A549 (cell line): ENCODE measurements at regions of chr6 and their contacts with region 1.

Region 1: DNA sequence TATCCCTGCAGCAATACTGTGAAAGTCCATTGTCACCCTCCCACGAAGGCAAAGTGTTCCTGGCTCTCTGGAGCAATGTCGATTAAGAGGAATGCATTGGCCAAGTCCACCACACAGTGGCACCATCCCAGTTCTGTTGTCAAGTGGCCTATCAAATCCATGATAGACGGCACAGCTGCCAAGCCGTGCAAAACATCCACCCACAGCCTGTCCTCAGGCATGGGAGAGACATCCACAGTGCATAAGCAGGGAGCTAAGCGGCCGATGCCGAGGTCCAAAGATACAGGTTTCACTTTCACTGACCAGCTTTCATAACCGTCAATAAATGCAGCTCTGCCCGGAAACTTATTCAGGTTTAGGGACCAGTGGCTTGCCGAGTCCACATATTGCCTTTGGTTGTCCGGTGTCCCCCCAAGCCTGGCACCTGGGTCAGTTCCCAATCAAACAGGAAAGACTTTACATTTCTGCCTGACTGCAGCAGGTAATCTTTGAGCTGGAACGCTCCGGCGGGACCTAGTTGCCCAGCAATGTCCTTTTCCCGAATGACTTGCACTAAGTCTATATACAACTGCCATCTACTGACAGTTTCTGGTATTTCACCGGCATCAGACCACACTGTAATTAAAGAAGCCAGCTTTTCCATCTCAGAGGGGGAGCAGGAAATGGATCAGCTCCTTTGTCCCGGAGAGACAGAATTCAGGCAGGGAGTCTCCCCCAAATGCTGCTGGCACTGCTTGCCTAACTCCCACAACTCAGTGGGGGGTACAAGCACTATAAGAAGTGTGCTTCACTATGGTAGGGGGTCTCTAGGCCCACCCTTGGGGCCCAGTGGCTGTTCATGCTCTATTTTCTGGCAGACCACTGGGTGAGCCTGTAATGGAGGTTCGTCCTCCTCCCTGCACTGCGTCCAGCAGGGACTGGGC is 6.3 kb downstream of the ZKSCAN3 start:
- DNase-seq: peak; percentile 48 to 81
- ATAC-seq: peak; percentile 93 to 96
- H3K4me3 ChIP-seq: peak overlapping the region; percentile 54
- H3K27ac ChIP-seq: peak overlapping the region; percentile 59 to 87; a peak in 5 of 6 replicates
- H3K4me1 ChIP-seq: peaks cover 19% of the 10 kb centered on the region
- CTCF ChIP-seq: peak; percentile 58
- EP300 ChIP-seq: no peak
- POLR2A ChIP-seq: no peak
- RAD21 ChIP-seq: peak; percentile 61 to 68

Region 2: DNA sequence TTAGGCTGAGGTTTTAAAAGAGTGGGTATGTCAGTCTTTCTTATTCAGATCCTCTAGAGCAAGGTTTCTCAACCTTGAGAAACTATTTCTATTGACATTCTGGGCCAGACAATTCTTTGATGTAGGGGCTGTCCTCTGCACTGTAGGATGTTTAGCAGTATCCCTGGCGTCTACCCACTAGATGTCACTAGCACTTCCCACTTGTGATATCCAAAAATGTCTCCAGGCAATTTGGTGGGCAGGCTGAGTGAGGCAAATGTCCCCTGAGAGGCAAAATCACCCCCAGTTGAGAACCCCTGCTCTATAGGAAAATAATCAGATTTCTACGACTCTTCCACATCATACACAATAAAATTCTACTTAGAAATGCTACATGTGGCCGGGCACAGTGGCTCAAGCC is 222.0 kb before region 1 on chr6:
- CTCF ChIA-PET with region 1: interaction called, 13 read pairs
- POLR2A ChIA-PET with region 1: no interaction called
- DNase-seq: peak; percentile 8 to 47
- ATAC-seq: peak; percentile 43 to 56; a peak in 3 of 6 replicates
- H3K4me3 ChIP-seq: no peak overlapping the region
- H3K27ac ChIP-seq: no peak overlapping the region
- H3K4me1 ChIP-seq: peaks cover 7% of the 10 kb centered on the region; the same call in 1 of the 3 replicates
- CTCF ChIP-seq: peak; percentile 45
- EP300 ChIP-seq: no peak
- POLR2A ChIP-seq: no peak
- RAD21 ChIP-seq: peak; percentile 39 to 44; a peak in 4 of 5 replicates

Region 3: GRCh38 chr6:28141500-28142329 is 214.3 kb before region 1 on chr6 and contains the start of gene ZKSCAN8:
- CTCF ChIA-PET with region 1: interaction called, 13 read pairs
- POLR2A ChIA-PET with region 1: interaction called, 5 read pairs
- DNase-seq: peak; percentile 81 to 93
- ATAC-seq: peak; percentile 96
- H3K4me3 ChIP-seq: peak within 1 kb of the TSS; percentile 98
- H3K27ac ChIP-seq: peak within 1 kb of the TSS; percentile 85 to 94
- H3K4me1 ChIP-seq: peaks cover 13% of the 10 kb centered on the region
- CTCF ChIP-seq: no peak
- EP300 ChIP-seq: no peak
- POLR2A ChIP-seq: peak; percentile 54
- RAD21 ChIP-seq: no peak
- polyA plus RNA-seq, gene ZKSCAN8: 8.9 and 16.2 TPM in 2 replicates

Region 4: GRCh38 chr6:28161410-28162079 is 194.5 kb before region 1 on chr6:
- CTCF ChIA-PET with region 1: no interaction called
- POLR2A ChIA-PET with region 1: no interaction called
- DNase-seq: peak; percentile 25 to 44
- ATAC-seq: peak; percentile 80 to 86
- H3K4me3 ChIP-seq: peak overlapping the region; percentile 43
- H3K27ac ChIP-seq: peak overlapping the region in 1 of 2 experiments; percentile 65; a peak in 1 of 6 replicates
- H3K4me1 ChIP-seq: no peaks in the 10 kb centered on the region
- CTCF ChIP-seq: no peak
- EP300 ChIP-seq: no peak
- POLR2A ChIP-seq: no peak
- RAD21 ChIP-seq: no peak

Region 5: GRCh38 chr6:28368522-28368921 is 12.5 kb after region 1 on chr6:
- CTCF ChIA-PET with region 1: interaction called, 10 read pairs
- POLR2A ChIA-PET with region 1: no interaction called
- DNase-seq: no peak
- ATAC-seq: no peak
- H3K4me3 ChIP-seq: no peak overlapping the region
- H3K27ac ChIP-seq: no peak overlapping the region
- H3K4me1 ChIP-seq: no peaks in the 10 kb centered on the region
- CTCF ChIP-seq: no peak
- EP300 ChIP-seq: no peak
- POLR2A ChIP-seq: no peak
- RAD21 ChIP-seq: no peak

Region 6: GRCh38 chr6:28383235-28384142 is 27.5 kb after region 1 on chr6:
- CTCF ChIA-PET with region 1: interaction called, 17 read pairs
- POLR2A ChIA-PET with region 1: no interaction called
- DNase-seq: peak; percentile 63 to 91
- ATAC-seq: peak; percentile 98
- H3K4me3 ChIP-seq: peak overlapping the region; percentile 51
- H3K27ac ChIP-seq: peak overlapping the region; percentile 79 to 86
- H3K4me1 ChIP-seq: peaks cover 8% of the 10 kb centered on the region; the same call in 2 of the 3 replicates
- CTCF ChIP-seq: peak; percentile 44
- EP300 ChIP-seq: no peak
- POLR2A ChIP-seq: no peak
- RAD21 ChIP-seq: peak; percentile 44 to 53; a peak in 4 of 5 replicates